ENCODE measurements at regions of chr15 and their contacts with region 1.

Region 1: GRCh38 chr15:77543159-77543882 is 89.4 kb downstream of the LINGO1 start:
- DNase-seq: peak; percentile 85
- H3K4me3 Mint-ChIP-seq: peak overlapping the region; percentile 63
- H3K27ac Mint-ChIP-seq: peak overlapping the region; percentile 25
- H3K4me1 Mint-ChIP-seq: peaks cover 17% of the 10 kb centered on the region
- H3K27me3 Mint-ChIP-seq: no peaks in the 10 kb centered on the region
- CTCF ChIP-seq: peak; percentile 97

Region 2: DNA sequence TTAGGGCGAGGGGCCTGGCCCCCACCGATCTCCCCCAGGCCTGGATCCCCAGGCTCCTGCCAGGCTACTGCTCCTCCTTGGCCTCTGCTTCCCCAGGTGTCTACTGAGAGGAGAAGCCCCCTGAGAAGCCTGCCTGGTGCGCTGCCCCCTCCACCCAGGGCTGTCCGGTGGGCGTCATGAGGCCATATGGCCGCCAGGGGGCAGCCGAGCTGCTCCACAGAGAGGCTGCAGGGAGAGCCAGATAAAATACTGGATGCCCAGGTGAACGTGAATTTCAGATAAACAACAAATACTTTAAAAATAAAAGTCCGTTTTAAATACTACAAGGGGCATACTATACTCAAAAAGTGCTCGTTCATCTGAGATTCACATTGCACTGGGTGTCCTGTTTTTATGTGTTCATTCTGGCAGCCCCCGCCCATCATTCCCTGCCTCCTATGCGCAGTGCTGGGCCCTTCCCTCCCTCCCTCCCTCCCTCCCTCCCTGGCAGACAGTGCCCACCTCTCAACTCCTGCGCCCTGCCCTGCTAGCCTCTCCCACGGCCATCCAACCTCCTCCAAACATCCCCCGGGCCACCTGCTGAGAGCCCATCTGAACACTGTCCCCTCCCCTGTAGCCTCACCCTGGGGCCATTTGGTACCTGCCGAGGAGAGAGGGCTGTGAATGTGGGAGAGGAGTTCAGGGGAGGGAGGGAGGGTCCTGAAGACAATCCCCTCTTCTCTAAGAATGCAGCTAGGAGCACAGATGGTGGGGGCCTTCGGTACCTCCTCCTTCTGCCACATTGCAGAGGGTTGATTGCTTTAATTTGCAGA is 518.8 kb before region 1 on chr15:
- CTCF ChIA-PET with region 1: interaction called, 4 read pairs
- POLR2A ChIA-PET with region 1: no interaction called
- intact Hi-C with region 1: loop called (anchors 1 kb)
- DNase-seq: peak; percentile 53
- H3K4me3 Mint-ChIP-seq: no peak overlapping the region
- H3K27ac Mint-ChIP-seq: no peak overlapping the region
- H3K4me1 Mint-ChIP-seq: peaks cover 9% of the 10 kb centered on the region
- H3K27me3 Mint-ChIP-seq: no peaks in the 10 kb centered on the region
- CTCF ChIP-seq: peak; percentile 97

Region 3: GRCh38 chr15:77118882-77119321 is 424.4 kb before region 1 on chr15:
- CTCF ChIA-PET with region 1: interaction called, 82 read pairs
- POLR2A ChIA-PET with region 1: interaction called, 7 read pairs
- intact Hi-C with region 1: loop called (anchors 1 kb)
- DNase-seq: peak; percentile 66
- H3K4me3 Mint-ChIP-seq: no peak overlapping the region
- H3K27ac Mint-ChIP-seq: no peak overlapping the region
- H3K4me1 Mint-ChIP-seq: no peaks in the 10 kb centered on the region
- H3K27me3 Mint-ChIP-seq: no peaks in the 10 kb centered on the region
- CTCF ChIP-seq: peak; percentile 64

Region 4: DNA sequence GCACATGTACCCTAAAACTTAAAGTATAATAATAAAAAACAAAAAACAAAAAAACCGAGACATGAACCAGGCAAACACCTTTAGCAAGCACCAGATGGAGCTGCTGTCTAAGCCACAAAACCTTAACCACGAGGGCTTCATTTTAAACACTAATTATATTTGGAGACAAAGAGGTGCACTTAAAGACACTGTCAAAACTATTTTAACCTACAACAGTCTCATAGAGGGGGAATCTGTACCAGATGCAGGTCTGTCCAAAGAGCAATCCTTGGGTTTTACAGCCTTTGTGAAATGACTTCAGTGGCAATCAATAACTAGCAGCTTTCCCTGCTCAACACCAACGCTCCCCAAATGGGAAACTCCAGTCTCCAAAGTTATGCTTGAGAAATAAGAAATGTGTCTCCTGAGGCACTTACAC is 356.7 kb before region 1 on chr15:
- CTCF ChIA-PET with region 1: interaction called, 70 read pairs
- POLR2A ChIA-PET with region 1: interaction called, 8 read pairs
- intact Hi-C with region 1: loop called (anchors 1 kb)
- DNase-seq: peak; percentile 39
- H3K4me3 Mint-ChIP-seq: no peak overlapping the region
- H3K27ac Mint-ChIP-seq: no peak overlapping the region
- H3K4me1 Mint-ChIP-seq: no peaks in the 10 kb centered on the region
- H3K27me3 Mint-ChIP-seq: no peaks in the 10 kb centered on the region
- CTCF ChIP-seq: peak; percentile 48

Region 5: DNA sequence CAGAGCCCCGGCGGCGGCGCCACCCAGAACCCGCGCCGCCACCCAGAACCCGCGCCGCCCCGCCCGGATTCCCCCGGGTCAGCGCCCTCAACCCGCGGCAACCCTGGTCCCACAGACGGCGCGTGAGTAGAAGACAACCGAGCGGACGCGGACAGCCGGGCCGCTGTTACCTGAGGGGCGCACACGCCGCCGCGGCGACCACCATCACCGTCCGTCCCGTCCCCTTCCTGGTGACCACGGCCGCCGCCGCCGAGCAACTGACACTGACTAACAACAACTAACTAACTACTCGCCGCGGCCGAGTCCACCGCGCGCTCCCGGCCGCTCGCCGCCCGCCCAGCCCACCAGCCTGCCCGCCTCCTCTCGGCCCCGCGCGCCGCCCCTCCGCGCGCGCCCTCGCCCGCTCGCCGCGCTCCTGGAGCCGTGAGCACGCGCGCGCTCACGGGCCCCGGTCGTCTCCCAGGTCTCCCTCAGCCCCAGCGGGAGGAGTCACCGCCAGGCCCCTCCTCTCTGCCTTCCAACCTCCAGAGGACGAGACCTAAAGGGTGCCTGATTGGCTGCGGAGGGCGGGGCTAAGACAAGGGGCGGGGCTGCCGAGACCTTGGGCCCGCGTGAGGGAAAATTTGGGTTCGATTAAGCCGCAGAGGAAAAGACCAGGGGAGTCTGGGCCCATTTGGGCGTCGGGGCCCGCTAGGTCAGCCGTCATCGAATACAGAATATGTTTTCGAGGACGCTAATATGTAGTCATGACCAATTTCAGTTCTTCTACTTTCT is 123.3 kb before region 1 on chr15 and contains the start of gene PEAK1:
- CTCF ChIA-PET with region 1: interaction called, 3 read pairs
- POLR2A ChIA-PET with region 1: interaction called, 5 read pairs
- intact Hi-C with region 1: loop called (anchors 2 kb)
- DNase-seq: peak; percentile 99
- H3K4me3 Mint-ChIP-seq: peak within 1 kb of the TSS; percentile 89
- H3K27ac Mint-ChIP-seq: peak within 1 kb of the TSS; percentile 98
- H3K4me1 Mint-ChIP-seq: peaks cover 41% of the 10 kb centered on the region
- H3K27me3 Mint-ChIP-seq: no peaks in the 10 kb centered on the region
- CTCF ChIP-seq: no peak
- total RNA-seq, gene PEAK1: 17.5 and 20.0 TPM in 2 replicates

Region 6: DNA sequence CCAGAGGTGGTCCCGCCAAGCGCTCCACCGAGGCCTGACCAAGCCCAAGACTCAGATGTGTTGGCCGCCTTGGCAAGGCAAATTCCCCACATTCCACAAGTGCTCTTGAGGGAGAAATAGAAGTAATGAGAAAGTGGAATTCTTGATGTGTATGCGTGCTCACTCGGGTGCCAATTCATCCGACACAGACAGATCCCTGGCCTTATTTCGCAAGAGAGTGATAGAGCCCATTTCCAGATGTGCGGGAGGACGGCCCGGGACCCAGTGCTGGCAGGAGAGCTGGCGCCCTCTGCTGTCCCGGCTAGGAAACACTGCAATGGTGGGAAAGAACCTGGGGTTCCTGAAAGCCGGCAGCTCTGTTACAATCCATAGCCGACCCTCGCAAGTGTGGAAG is 46.6 kb before region 1 on chr15:
- CTCF ChIA-PET with region 1: interaction called, 43 read pairs
- POLR2A ChIA-PET with region 1: interaction called, 11 read pairs
- intact Hi-C with region 1: loop called (anchors 1 kb)
- DNase-seq: peak; percentile 92
- H3K4me3 Mint-ChIP-seq: no peak overlapping the region
- H3K27ac Mint-ChIP-seq: no peak overlapping the region
- H3K4me1 Mint-ChIP-seq: peaks cover 24% of the 10 kb centered on the region
- H3K27me3 Mint-ChIP-seq: no peaks in the 10 kb centered on the region
- CTCF ChIP-seq: peak; percentile 98

Region 7: DNA sequence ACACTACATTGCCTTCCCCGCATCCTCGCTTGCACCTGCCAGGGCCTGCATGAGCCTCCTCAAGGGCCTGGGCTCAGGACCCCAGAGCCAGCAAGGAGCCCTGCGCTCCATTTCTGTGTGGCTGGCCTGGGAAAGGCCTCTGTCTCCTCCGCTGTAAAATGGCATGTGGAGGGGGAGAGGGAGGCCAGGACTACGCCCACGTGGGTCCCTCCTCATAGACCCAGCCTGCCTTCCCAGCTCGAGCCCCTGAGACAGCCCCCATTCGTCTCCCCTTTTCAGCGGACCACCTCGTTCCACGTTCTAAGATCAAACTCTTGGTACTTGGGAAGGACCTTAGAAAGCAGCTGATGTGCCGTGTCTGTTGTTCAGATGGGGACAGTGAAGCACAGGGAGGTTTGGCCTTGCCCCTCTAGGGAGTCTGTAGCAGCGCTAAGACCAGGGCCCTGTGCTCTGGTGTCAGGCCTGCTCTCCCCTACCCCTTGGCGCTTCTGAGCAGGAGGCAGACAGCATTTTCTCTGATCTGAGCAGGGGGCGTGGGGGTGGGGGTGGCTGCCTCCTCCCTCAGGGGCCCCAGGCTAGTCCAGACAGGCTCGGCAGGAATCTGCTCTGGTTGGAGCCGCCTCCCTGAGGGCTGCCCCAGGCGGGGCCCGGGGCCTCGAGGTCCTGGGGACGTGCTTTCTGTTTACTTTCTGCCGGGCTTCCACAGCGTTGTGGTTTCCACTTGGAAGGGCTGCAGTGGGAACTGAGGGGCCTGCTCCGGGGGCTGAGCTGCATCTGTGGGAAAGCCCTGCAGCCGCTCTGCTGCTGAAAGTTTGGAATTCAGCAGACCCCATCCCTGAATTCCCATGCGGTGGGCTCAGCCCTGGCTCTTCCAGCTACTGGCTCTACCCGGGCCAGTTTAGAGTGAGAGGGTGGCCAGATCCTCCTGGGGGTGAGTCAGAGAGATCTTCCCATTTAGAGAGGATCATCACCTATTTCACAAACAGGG is 16.2 kb before region 1 on chr15:
- CTCF ChIA-PET with region 1: interaction called, 22 read pairs
- POLR2A ChIA-PET with region 1: no interaction called
- intact Hi-C with region 1: no loop called
- DNase-seq: no peak
- H3K4me3 Mint-ChIP-seq: no peak overlapping the region
- H3K27ac Mint-ChIP-seq: no peak overlapping the region
- H3K4me1 Mint-ChIP-seq: no peaks in the 10 kb centered on the region
- H3K27me3 Mint-ChIP-seq: no peaks in the 10 kb centered on the region
- CTCF ChIP-seq: no peak

Region 8: GRCh38 chr15:77738441-77739302 is 195.4 kb after region 1 on chr15:
- CTCF ChIA-PET with region 1: no interaction called
- POLR2A ChIA-PET with region 1: no interaction called
- intact Hi-C with region 1: no loop called
- DNase-seq: no peak
- H3K4me3 Mint-ChIP-seq: no peak overlapping the region
- H3K27ac Mint-ChIP-seq: no peak overlapping the region
- H3K4me1 Mint-ChIP-seq: no peaks in the 10 kb centered on the region
- H3K27me3 Mint-ChIP-seq: peaks cover 59% of the 10 kb centered on the region
- CTCF ChIP-seq: no peak

Region 9: DNA sequence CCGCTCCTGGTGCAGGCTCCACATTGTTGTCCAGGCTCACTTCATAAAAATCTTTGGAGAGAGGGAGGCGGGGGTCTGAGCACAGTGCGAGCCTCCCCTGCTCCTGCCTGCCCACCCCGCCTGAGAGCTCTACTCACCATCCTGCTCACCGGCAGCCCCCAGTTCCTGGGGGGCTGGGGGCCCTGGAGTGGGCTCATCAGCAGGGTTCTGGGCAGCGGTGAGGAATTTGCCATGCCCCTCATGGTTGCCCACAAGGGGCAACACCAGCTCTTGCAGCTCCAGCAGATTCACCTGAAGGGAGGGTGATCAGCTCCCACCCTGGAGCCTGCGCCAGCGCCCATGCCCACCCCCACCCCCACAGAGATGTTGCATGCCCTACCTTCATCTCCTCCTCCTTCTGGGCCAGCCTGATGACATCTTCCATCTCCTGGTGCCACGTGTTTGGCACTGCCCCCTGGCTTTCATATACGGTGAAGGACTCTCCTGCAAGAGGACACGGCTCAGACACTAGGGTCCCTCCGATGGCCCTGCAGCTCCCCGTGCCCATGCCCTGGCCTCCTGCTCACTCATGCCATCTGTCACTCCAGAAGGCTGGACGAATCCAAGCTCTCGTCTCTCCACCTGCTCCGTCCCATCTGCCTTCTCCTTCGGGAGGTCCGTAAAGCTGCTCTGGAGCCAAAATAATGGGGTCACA is 372.1 kb after region 1 on chr15:
- CTCF ChIA-PET with region 1: no interaction called
- POLR2A ChIA-PET with region 1: no interaction called
- intact Hi-C with region 1: no loop called
- DNase-seq: no peak
- H3K4me3 Mint-ChIP-seq: no peak overlapping the region
- H3K27ac Mint-ChIP-seq: no peak overlapping the region
- H3K4me1 Mint-ChIP-seq: no peaks in the 10 kb centered on the region
- H3K27me3 Mint-ChIP-seq: peaks cover 72% of the 10 kb centered on the region
- CTCF ChIP-seq: no peak

Region 10: DNA sequence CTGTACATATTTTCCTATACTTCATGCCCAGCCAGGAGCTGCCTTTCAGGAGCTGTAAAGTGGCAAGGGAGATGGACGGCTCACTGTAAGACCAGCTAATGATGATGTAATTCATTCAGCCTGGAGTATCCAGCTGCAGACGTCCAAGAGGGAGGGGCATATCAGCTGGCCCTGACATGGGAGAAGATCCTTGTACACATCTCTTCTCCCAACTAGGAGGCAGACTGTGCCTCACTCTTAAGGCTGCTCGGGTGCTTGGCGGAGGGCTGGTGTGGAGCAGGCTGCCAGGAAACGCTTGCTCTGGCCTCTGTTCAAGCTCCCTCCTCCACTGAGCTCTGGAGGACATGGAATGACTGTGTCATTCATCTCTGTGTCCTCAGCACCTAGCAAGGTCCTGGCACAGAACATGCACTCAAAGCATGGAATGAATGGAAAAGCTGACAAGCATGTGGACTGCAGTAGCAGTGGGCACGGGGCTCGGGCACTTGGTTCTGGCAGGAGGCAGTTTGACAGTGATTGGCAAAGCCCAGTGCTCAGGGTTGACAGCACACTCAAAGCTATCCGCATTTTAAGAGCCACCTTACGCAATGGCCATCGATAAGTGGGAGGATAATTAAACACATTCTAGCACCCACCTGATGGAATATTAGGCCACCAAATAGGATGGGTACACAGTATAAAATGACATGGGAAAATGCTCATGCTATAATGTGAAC is 461.8 kb after region 1 on chr15:
- CTCF ChIA-PET with region 1: no interaction called
- POLR2A ChIA-PET with region 1: no interaction called
- intact Hi-C with region 1: no loop called
- DNase-seq: peak; percentile 82
- H3K4me3 Mint-ChIP-seq: no peak overlapping the region
- H3K27ac Mint-ChIP-seq: no peak overlapping the region
- H3K4me1 Mint-ChIP-seq: peaks cover 39% of the 10 kb centered on the region
- H3K27me3 Mint-ChIP-seq: no peaks in the 10 kb centered on the region
- CTCF ChIP-seq: no peak

Measured in MCF 10A (cell line).